Endothelial cell of umbilical vein (primary cell): ENCODE measurements at regions of chr3 and their contacts with region 1.

Region 1: DNA sequence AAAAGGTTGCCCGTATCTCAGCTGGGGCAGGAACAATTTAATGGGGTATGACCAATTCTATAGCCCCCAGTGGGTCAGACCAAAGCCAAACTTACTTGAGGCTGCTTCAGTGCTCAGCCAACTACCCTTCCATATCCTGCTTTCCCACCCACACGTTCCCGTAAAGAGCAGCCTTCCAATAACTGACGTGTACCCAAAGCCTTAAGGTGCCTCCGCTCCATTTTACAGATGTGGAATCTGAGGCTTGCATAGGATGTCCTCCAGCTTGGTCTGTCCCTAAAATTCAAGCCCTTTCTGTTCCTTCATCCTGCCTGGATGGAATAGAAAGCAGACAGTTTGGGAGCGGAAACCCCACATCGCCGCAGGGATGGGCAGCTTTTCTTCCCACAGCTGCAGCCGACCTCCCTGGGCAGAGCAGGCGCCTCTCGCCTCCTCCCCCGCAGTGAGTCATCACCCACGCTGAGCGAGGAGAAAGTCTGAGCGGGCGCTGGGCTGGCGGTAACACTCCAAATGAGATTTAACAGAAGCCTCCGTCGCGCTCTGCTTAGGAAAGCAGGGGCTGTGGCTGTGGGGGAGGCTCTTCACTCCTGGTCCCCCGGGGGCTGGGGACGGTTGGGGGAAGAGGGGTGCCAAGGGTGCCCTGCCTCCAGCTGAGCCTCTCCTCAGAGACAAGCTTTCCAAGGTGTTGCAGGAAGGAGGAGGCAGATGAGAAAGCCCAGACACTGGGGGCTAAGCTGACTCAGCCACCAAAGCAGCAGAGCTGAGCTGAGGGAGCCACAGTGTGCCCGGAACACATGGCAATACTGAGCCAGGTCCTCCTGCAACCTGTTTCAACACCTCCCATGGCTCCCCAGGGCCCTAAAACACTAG is 57.8 kb upstream of the HRH1 start:
- DNase-seq: peak; percentile 77
- H3K4me3 ChIP-seq: peak overlapping the region in 2 of 3 experiments; percentile 3 to 12
- H3K27ac ChIP-seq: no peak overlapping the region
- H3K4me1 ChIP-seq: peaks cover 9% of the 10 kb centered on the region
- H3K27me3 ChIP-seq: no peaks in the 10 kb centered on the region
- CTCF ChIP-seq: no peak
- POLR2A ChIP-seq: no peak

Region 2: GRCh38 chr3:11120091-11120805 is 23.7 kb after region 1 on chr3:
- CTCF ChIA-PET with region 1: interaction called, 14 read pairs
- POLR2A ChIA-PET with region 1: no interaction called
- dilution Hi-C with region 1: no loop called
- intact Hi-C with region 1: no loop called
- DNase-seq: no peak
- H3K4me3 ChIP-seq: no peak overlapping the region
- H3K27ac ChIP-seq: no peak overlapping the region
- H3K4me1 ChIP-seq: no peaks in the 10 kb centered on the region
- H3K27me3 ChIP-seq: peaks cover 0 to 4% of the 10 kb centered on the region in 2 experiments
- CTCF ChIP-seq: no peak
- POLR2A ChIP-seq: no peak

Region 3: DNA sequence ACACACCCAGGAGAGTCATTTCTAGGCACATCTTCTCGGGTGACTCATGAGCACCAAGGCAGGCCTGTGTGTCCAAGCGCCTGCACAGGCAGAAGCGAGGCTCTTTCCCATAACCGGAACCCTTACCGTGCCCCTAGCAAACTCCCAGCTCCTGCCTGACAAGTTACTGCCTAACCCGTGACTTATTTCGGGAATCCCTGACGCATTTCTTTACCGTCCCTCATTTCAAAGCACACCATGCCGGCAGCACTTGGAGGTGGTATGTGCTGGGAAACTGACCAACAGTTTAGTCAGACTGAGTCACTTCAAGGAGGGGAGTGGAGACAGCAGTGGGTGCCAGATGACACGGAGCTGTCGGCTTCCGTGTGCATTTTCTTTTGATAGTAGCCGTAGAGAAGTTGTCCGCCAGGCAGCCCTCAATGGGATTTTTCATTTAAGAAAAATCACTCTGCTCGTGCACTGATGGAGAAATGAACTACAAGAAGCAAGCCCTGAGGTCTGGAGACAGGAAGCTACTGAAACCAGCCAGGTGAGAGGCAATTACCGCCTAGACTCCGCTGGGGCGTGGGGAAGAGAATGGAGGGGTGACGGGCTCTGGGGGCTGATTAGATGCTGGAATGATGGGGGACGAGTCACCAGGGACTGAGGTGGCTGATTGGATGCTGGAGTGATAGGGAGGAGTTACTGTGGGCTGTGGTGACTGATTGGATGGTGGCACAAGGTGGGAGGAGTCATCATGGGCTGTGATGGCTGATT is 40.5 kb after region 1 on chr3:
- CTCF ChIA-PET with region 1: interaction called, 3 read pairs
- POLR2A ChIA-PET with region 1: no interaction called
- dilution Hi-C with region 1: no loop called
- intact Hi-C with region 1: loop called (anchors 5 kb)
- DNase-seq: peak; percentile 75
- H3K4me3 ChIP-seq: peak overlapping the region in 2 of 3 experiments; percentile 1 to 49
- H3K27ac ChIP-seq: peak overlapping the region; percentile 89
- H3K4me1 ChIP-seq: peaks cover 9% of the 10 kb centered on the region
- H3K27me3 ChIP-seq: no peaks in the 10 kb centered on the region
- CTCF ChIP-seq: no peak
- POLR2A ChIP-seq: no peak

Region 4: DNA sequence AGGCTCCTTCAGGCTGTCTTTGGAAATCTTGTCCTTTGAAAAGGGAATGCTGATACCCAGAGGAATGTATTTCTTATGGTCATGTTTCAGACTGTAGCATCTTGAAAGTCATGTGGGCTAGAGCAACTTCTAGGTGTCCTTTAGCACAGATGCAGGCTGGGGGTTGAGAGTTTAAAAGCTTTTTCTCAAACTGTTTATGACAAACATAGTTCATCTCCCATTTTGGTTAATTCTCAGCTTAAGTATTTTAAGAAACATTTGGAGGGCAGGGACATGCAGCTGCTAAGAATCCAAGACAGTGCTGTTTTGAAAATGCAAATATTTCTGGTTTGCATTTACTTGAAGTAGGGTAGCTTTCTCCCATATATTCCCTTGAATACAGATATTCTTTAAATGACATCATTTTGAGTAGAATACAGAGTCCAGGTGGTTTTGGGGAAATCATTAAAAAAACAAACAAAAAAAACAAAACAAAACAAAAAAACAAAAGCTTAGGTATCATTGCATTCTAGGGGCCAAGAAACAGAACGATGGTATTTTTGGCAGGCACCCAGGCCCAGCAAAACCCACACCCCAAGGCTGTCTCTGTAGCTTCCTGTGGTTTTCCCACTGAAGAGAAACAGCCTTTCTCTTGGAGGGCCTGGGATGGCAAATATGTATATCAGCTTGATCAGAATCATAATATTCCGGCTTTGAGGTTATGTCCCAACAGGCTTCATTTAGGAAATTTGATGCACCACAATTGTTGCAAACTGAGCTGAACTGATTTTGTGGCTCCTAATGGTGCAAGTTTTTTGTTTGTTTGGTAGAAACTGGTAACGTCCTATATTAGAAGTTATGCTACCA is 295.7 kb after region 1 on chr3:
- CTCF ChIA-PET with region 1: no interaction called
- POLR2A ChIA-PET with region 1: no interaction called
- dilution Hi-C with region 1: no loop called
- intact Hi-C with region 1: no loop called
- DNase-seq: peak; percentile 42
- H3K4me3 ChIP-seq: no peak overlapping the region
- H3K27ac ChIP-seq: peak overlapping the region; percentile 16
- H3K4me1 ChIP-seq: peaks cover 19% of the 10 kb centered on the region
- H3K27me3 ChIP-seq: no peaks in the 10 kb centered on the region
- CTCF ChIP-seq: no peak
- POLR2A ChIP-seq: no peak

Region 5: GRCh38 chr3:11548721-11549131 is 452.2 kb after region 1 on chr3:
- CTCF ChIA-PET with region 1: no interaction called
- POLR2A ChIA-PET with region 1: interaction called, 10 read pairs
- dilution Hi-C with region 1: no loop called
- intact Hi-C with region 1: no loop called
- DNase-seq: peak; percentile 85
- H3K4me3 ChIP-seq: no peak overlapping the region
- H3K27ac ChIP-seq: peak overlapping the region; percentile 39
- H3K4me1 ChIP-seq: peaks cover 16% of the 10 kb centered on the region
- H3K27me3 ChIP-seq: no peaks in the 10 kb centered on the region
- CTCF ChIP-seq: no peak
- POLR2A ChIP-seq: no peak

Region 6: DNA sequence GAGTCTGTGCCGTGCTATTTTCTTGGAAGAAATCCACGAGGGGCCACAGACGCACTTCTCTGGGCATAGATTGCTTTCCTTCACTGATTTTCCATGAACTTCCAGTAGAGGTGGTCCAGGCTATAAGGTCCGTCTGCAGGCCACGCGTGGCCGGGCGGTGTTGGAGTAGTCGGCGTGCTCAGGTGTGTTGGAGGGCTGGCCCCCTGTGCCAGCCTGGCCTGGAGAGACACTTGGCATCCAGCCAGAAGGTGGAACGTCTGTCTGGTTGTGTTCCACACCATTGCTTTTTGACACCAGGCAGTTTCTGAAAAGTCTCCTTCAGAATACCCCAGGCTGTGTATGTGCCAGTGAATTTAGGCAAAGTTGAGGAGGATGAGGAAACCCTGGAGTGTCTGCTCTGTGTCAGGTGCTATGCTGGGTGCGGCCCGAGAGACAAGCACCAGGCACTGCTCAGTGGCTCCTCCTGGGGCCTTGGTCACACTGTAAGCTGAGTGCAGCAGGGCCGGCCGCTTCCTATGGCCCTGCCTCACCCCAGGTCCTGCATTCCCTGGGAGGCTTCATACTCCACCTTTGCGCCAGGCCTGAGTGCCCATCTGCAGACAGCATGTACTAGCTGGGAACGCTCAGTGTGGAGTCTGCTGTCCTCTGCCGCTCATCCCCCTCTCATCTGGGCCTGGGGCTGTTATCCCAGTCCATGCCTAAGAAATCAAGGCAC is 802.3 kb after region 1 on chr3:
- CTCF ChIA-PET with region 1: no interaction called
- POLR2A ChIA-PET with region 1: no interaction called
- dilution Hi-C with region 1: no loop called
- intact Hi-C with region 1: no loop called
- DNase-seq: no peak
- H3K4me3 ChIP-seq: no peak overlapping the region
- H3K27ac ChIP-seq: no peak overlapping the region
- H3K4me1 ChIP-seq: no peaks in the 10 kb centered on the region
- H3K27me3 ChIP-seq: no peaks in the 10 kb centered on the region
- CTCF ChIP-seq: no peak
- POLR2A ChIP-seq: no peak